SK-N-SH (cell line): ENCODE measurements at regions of chr15 and their contacts with region 1.

Region 1: DNA sequence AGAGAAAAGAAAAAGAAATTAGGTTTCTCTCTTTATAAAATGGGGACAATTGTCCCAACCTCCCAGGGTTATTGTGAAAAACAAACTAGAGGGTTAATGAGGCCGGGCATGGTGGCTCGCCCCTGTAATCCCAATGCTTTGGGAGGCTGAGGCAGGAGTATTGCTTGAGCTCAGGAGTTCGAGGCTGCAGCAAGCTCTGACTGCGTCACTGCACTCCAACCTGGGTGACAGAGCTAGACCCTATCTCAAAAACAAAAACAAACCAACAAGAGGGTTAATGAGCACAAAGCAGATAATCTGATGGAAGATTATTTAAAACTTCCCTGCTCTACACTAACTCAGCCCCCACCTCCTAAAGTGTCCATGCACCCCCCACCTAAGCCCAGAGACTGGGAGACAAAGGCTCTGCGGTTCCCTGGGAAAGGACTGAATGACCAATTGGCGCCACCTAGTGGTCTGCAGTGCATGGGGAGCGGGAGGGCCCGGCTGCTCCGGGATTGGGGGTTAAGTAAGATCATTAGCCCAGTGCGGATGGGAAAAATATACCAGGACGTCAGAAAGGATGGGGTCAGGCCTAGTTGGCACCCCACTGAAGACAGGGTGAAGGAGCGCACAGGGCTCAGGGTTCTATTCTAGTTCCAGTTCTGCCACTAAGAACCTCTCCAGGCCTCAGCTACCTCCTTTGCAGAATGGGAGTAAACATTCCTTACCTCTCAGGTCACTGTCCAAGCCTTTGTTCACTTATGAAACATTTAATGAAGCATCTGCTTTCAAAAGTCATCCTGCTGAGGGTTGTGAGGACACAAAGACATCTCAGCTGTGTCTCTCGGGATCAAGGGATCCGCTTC is 15.6 kb downstream of the PIF1 start:
- DNase-seq: peak; percentile 91
- H3K4me3 ChIP-seq: peak overlapping the region in 1 of 2 experiments; percentile 20; a peak in 1 of 4 replicates
- H3K27ac ChIP-seq: no peak overlapping the region
- H3K4me1 ChIP-seq: peaks cover 0 to 14% of the 10 kb centered on the region in 2 experiments; a peak in 2 of 4 replicates
- H3K27me3 ChIP-seq: no peaks in the 10 kb centered on the region
- CTCF ChIP-seq: peak; percentile 98
- EP300 ChIP-seq: no peak
- RAD21 ChIP-seq: peak; percentile 94

Region 2: DNA sequence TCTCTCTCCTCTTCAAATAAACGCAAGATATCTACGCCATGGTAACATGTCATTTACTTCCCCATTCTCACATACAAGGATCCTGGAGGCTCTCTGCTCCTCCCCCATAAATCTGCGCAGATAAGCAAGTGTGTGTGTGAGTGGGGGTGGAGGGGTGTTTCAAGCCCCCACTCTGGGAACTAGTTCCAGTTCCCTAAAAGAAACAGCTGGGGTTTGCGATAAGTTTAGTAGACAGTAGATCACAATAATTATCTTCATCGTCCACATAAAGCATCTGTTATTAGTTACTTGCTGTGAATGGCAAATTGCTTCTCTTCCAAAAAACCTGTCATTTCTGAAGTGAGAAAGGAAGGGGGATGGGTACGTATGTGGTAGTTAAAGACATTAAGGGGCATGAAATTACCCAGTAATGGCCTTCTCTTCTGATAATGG is 114.3 kb before region 1 on chr15:
- CTCF ChIA-PET with region 1: interaction called, 10 read pairs
- POLR2A ChIA-PET with region 1: no interaction called
- DNase-seq: peak; percentile 39
- H3K4me3 ChIP-seq: no peak overlapping the region
- H3K27ac ChIP-seq: peak overlapping the region in 1 of 2 experiments; percentile 92; a peak in 2 of 4 replicates
- H3K4me1 ChIP-seq: peaks cover 28 to 60% of the 10 kb centered on the region in 2 experiments
- H3K27me3 ChIP-seq: no peaks in the 10 kb centered on the region
- CTCF ChIP-seq: no peak
- EP300 ChIP-seq: peak in 1 of 2 experiments; percentile 72; a peak in 1 of 4 replicates
- RAD21 ChIP-seq: no peak

Region 3: GRCh38 chr15:64740311-64741170 is 69.3 kb before region 1 on chr15:
- CTCF ChIA-PET with region 1: interaction called, 286 read pairs
- POLR2A ChIA-PET with region 1: no interaction called
- DNase-seq: peak; percentile 42
- H3K4me3 ChIP-seq: no peak overlapping the region
- H3K27ac ChIP-seq: no peak overlapping the region
- H3K4me1 ChIP-seq: no peaks in the 10 kb centered on the region
- H3K27me3 ChIP-seq: no peaks in the 10 kb centered on the region
- CTCF ChIP-seq: peak; percentile 24
- EP300 ChIP-seq: no peak
- RAD21 ChIP-seq: peak; percentile 32

Region 4: GRCh38 chr15:64775551-64776401 is 34.1 kb before region 1 on chr15 and contains the start of gene RBPMS2:
- CTCF ChIA-PET with region 1: interaction called, 17 read pairs
- POLR2A ChIA-PET with region 1: no interaction called
- DNase-seq: peak; percentile 90
- H3K4me3 ChIP-seq: peak within 1 kb of the TSS; percentile 67 to 87
- H3K27ac ChIP-seq: peak within 1 kb of the TSS; percentile 18 to 56; a peak in 1 of 4 replicates
- H3K4me1 ChIP-seq: peaks cover 4 to 10% of the 10 kb centered on the region in 2 experiments; a peak in 1 of 4 replicates
- H3K27me3 ChIP-seq: no peaks in the 10 kb centered on the region
- CTCF ChIP-seq: no peak
- EP300 ChIP-seq: no peak
- RAD21 ChIP-seq: no peak
- polyA plus RNA-seq, gene RBPMS2: 2.6 and 6.5 TPM in 2 replicates

Region 5: GRCh38 chr15:64792282-64792681 is 17.6 kb before region 1 on chr15:
- CTCF ChIA-PET with region 1: interaction called, 21 read pairs
- POLR2A ChIA-PET with region 1: no interaction called
- DNase-seq: no peak
- H3K4me3 ChIP-seq: no peak overlapping the region
- H3K27ac ChIP-seq: no peak overlapping the region
- H3K4me1 ChIP-seq: no peaks in the 10 kb centered on the region
- H3K27me3 ChIP-seq: no peaks in the 10 kb centered on the region
- CTCF ChIP-seq: no peak
- EP300 ChIP-seq: no peak
- RAD21 ChIP-seq: no peak